ENCODE measurements at regions of chr14 and their contacts with region 1.

Region 1: GRCh38 chr14:23916004-23916403 is 37.6 kb upstream of the DHRS4 start:
- DNase-seq: no peak
- CTCF ChIP-seq: no peak

Region 2: GRCh38 chr14:23929822-23930294 is 13.9 kb after region 1 on chr14:
- CTCF ChIA-PET with region 1: interaction called, 22 read pairs
- POLR2A ChIA-PET with region 1: no interaction called
- DNase-seq: peak; percentile 81
- CTCF ChIP-seq: peak; percentile 81

Measured in GM10248 (cell line).